ENCODE measurements at regions of chr10 and their contacts with region 1.

Region 1: DNA sequence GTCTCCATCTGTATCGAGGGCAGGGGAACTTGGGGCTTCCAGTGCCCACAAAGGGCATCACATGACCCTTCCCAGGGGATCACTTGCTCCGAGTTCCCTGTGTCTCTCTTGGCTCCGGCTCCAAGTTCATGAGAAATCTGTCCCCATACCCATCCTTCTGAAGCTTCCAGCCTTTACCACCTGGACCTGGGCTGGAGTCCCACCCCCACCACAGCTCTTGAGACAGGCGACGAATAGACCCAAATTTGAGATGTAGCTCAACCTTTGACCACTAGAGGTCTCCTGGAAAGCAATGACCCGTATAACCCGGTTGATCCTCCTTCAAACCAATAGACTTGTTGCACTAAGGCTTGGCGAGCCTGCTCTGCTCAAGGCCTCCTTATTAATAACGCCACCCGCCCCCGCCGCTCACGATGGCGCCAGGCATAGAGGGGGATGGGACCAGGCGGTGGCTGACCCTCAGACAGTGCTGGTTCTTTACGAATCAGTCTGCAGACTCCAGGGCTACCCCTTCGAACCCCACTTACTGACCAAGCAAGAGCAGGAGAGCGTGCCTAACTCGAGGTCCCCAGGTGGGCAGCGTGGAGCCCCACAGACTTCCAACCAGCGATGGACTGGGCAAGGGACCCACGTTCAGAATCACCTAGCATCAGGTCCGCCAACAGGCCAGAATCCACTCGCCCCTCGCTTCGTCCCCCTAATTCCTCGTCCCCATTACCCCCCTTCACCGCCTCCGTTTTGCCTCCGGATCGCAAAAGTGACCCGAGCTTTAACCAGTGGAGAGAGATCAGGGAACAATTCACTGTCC is 4.4 kb upstream of the ARID5B start:
- DNase-seq: peak; percentile 91
- ATAC-seq: no peak; the same call in 1 of the 2 replicates
- H3K4me3 ChIP-seq: no peak overlapping the region
- H3K27ac ChIP-seq: no peak overlapping the region
- H3K4me1 ChIP-seq: peaks cover 38% of the 10 kb centered on the region
- H3K27me3 ChIP-seq: no peaks in the 10 kb centered on the region
- CTCF ChIP-seq: peak; percentile 99

Region 2: GRCh38 chr10:61286686-61287085 is 610.4 kb before region 1 on chr10:
- CTCF ChIA-PET with region 1: no interaction called
- POLR2A ChIA-PET with region 1: no interaction called
- intact Hi-C with region 1: no loop called
- DNase-seq: no peak
- ATAC-seq: no peak
- H3K4me3 ChIP-seq: no peak overlapping the region
- H3K27ac ChIP-seq: no peak overlapping the region
- H3K4me1 ChIP-seq: peaks cover 6% of the 10 kb centered on the region
- H3K27me3 ChIP-seq: no peaks in the 10 kb centered on the region
- CTCF ChIP-seq: no peak

Region 3: GRCh38 chr10:61760943-61761824 is 135.9 kb before region 1 on chr10:
- CTCF ChIA-PET with region 1: interaction called, 6 read pairs
- POLR2A ChIA-PET with region 1: no interaction called
- intact Hi-C with region 1: loop called (anchors 2 kb)
- DNase-seq: peak; percentile 99
- ATAC-seq: peak; percentile 66
- H3K4me3 ChIP-seq: peak overlapping the region; percentile 4; the same call in 1 of the 2 replicates
- H3K27ac ChIP-seq: peak overlapping the region; percentile 77
- H3K4me1 ChIP-seq: peaks cover 53% of the 10 kb centered on the region
- H3K27me3 ChIP-seq: no peaks in the 10 kb centered on the region
- CTCF ChIP-seq: no peak

Region 4: DNA sequence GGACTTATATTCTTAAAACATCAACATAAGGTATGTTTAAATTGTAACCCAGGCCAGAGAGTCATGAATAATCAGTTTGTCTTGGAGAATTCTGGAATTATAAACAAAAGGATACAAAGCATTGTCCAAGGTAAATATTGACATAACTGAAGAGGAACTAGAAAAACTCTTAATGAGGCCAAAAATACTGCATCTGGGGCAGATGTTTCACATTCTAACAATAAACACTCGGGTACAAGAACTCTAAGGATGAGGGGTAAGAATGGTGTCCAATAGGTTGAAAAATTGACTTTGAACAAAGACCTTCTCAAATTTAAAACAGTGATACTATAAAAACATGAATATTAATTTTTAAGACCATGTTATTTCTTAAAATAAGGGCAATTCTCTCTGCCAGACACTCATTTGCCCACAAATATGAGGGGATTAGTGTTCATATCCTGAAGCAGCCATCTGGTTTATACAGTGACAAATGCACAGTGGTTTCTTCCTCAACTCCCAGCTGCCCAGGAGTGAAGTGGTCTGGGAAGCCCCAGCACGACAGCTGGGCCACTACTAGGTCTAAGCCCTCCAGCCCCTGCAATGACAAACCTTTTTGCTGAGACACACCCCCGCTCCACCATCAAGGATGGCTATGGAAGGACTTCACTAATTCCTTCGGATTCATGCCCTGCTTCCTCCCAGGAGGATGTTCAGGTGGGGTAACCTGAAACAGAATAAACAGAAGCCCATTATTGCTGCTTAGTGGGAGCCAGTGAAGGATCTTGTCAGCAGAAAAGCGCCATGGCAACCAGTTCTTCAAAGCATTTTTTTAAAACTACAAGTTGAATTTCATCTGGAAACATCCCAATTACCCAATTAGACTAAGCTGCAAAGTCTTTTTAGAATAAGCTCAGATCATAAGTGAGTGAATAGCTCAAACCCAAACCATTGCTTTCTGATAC is 103.0 kb before region 1 on chr10:
- CTCF ChIA-PET with region 1: no interaction called
- POLR2A ChIA-PET with region 1: no interaction called
- intact Hi-C with region 1: loop called (anchors 1 kb)
- DNase-seq: peak; percentile 72
- ATAC-seq: peak; percentile 82
- H3K4me3 ChIP-seq: no peak overlapping the region
- H3K27ac ChIP-seq: no peak overlapping the region
- H3K4me1 ChIP-seq: peaks cover 23% of the 10 kb centered on the region
- H3K27me3 ChIP-seq: no peaks in the 10 kb centered on the region
- CTCF ChIP-seq: no peak

Region 5: DNA sequence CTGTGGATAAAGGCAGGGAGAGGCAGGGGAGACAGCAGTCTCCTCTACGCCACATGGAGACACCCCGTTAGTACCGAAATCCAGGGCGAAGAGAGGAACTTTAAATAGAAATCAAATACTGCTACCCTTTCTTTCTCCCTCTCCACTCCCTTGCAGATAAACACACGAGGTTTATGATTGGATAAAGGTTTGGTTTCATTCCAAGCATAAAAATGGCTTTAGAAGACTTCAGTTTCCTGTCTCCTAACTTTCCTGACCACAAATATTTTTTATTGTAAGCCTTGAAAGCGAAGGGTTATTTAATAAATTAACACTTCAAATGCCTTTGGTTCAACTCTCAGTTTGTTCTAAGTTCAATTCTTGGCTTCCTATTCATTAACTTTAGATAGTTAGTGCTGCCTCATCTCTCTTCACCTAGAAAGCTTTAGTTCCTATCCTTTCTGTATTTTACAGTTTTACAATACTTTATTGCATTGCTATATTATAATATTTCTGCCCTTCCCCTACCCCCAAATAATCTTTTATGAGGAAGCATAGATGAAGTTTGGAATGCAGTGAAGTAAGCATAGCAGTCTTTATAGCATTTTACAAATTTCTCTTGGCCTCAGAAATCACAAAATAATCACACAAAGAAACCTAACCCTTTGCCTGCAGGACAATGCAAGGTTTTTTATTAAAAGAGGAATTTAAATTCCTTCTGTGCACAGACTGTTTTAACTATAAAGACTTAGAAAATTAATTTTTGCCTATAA is 27.1 kb before region 1 on chr10:
- CTCF ChIA-PET with region 1: interaction called, 5 read pairs
- POLR2A ChIA-PET with region 1: interaction called, 3 read pairs
- intact Hi-C with region 1: loop called (anchors 2 kb)
- DNase-seq: peak; percentile 73
- ATAC-seq: peak; percentile 80
- H3K4me3 ChIP-seq: no peak overlapping the region
- H3K27ac ChIP-seq: no peak overlapping the region
- H3K4me1 ChIP-seq: peaks cover 16% of the 10 kb centered on the region
- H3K27me3 ChIP-seq: no peaks in the 10 kb centered on the region
- CTCF ChIP-seq: no peak

Measured in PC-3 (cell line).